PC-9 (cell line): ENCODE measurements at regions of chr11 and their contacts with region 1.

Region 1: DNA sequence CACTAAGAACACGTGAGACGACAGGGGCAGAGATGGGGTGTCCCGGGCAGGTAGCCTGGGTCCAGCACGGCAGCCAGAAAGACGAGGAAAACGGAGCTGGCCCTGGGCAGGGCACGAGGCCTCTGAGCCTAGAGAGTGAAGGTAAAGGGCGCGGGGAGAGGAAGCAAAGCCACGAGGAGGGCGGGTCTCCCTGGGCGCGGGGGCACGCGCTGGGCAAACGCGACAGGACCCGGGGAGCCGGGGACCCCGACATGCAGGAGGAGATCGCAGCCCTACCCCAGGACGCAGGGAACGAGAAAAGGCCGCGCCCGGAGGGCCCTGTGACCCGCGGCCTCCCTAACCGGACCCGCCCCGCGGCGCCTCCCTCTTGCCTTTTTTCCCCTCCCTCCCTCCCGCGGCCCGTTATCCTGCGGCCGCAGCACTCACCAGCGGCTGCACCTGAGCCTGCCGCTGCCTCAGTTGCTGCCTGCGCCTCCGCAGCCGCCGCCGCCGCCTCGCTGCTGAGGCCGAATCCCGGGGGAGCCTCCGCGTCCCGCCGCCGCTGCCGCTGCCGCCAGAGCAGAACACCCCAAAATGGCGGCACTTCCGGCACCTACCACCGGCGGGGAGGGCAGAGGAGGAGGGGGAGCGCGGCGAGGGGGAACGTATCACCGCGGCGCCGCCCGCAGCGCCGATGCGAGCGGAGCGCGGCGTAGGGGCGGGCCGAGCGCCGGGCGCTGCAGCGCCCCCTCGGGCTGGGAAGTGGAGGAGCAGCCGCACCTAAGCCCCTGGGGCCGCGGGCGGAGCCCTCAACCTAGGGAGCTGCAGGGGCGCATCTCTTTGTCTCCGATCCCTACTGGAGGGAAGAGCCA is at the start of gene CELF1:
- DNase-seq: peak; percentile 77 to 96
- H3K4me3 ChIP-seq: peak within 1 kb of the TSS; percentile 80
- H3K27ac ChIP-seq: peak within 1 kb of the TSS; percentile 87
- H3K4me1 ChIP-seq: peaks cover 24% of the 10 kb centered on the region
- H3K27me3 ChIP-seq: no peaks in the 10 kb centered on the region
- CTCF ChIP-seq: peak; percentile 85
- total RNA-seq, gene CELF1: 115 and 165 TPM in 2 replicates

Region 2: GRCh38 chr11:47186076-47186936 is 366.5 kb before region 1 on chr11 and contains the start of gene PACSIN3:
- CTCF ChIA-PET with region 1: interaction called, 11 read pairs
- POLR2A ChIA-PET with region 1: no interaction called
- intact Hi-C with region 1: no loop called
- DNase-seq: peak in 1 of 2 experiments; percentile 64
- H3K4me3 ChIP-seq: peak within 1 kb of the TSS; percentile 77
- H3K27ac ChIP-seq: peak within 1 kb of the TSS; percentile 84
- H3K4me1 ChIP-seq: peaks cover 56% of the 10 kb centered on the region
- H3K27me3 ChIP-seq: no peaks in the 10 kb centered on the region
- CTCF ChIP-seq: no peak
- total RNA-seq, gene PACSIN3: 113 and 114 TPM in 2 replicates

Region 3: GRCh38 chr11:47403571-47403970 is 149.2 kb before region 1 on chr11:
- CTCF ChIA-PET with region 1: no interaction called
- POLR2A ChIA-PET with region 1: no interaction called
- intact Hi-C with region 1: no loop called
- DNase-seq: peak in 1 of 2 experiments; percentile 24
- H3K4me3 ChIP-seq: no peak overlapping the region
- H3K27ac ChIP-seq: no peak overlapping the region
- H3K4me1 ChIP-seq: peaks cover 11% of the 10 kb centered on the region
- H3K27me3 ChIP-seq: no peaks in the 10 kb centered on the region
- CTCF ChIP-seq: no peak

Region 4: GRCh38 chr11:47466701-47467250 is 86.0 kb before region 1 on chr11:
- CTCF ChIA-PET with region 1: interaction called, 3 read pairs
- POLR2A ChIA-PET with region 1: no interaction called
- intact Hi-C with region 1: loop called (anchors 5 kb)
- DNase-seq: peak; percentile 67 to 75
- H3K4me3 ChIP-seq: no peak overlapping the region
- H3K27ac ChIP-seq: peak overlapping the region; percentile 5; the same call in 1 of the 2 replicates
- H3K4me1 ChIP-seq: peaks cover 22% of the 10 kb centered on the region
- H3K27me3 ChIP-seq: no peaks in the 10 kb centered on the region
- CTCF ChIP-seq: no peak

Region 5: DNA sequence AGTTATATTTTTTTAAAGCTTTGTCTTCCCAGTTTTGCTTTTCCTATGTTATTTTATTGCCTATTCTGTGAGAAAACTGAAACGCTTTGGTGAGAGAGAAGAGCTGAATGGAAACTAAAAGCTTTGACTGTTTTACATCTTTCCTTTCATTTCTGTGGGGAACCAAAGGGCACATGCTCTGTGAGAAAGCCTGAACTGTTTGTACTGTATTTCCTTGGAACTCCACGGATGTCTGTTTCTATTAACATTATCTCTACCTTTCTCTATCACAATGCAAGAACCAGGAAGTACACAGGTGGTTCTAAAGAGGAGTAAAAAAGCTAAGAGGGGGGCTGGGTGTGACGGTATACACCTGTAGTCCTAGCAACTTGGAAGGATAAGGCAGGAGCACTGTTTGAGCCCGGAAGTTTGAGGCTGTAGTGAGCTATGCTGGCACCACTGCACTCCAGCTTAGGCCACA is 43.7 kb before region 1 on chr11:
- CTCF ChIA-PET with region 1: interaction called, 6 read pairs
- POLR2A ChIA-PET with region 1: no interaction called
- intact Hi-C with region 1: loop called (anchors 1 kb)
- DNase-seq: peak in 1 of 2 experiments; percentile 68
- H3K4me3 ChIP-seq: no peak overlapping the region
- H3K27ac ChIP-seq: peak overlapping the region; percentile 80
- H3K4me1 ChIP-seq: peaks cover 49% of the 10 kb centered on the region
- H3K27me3 ChIP-seq: no peaks in the 10 kb centered on the region
- CTCF ChIP-seq: no peak

Region 6: GRCh38 chr11:47628026-47628425 is 75.2 kb after region 1 on chr11:
- CTCF ChIA-PET with region 1: no interaction called
- POLR2A ChIA-PET with region 1: no interaction called
- intact Hi-C with region 1: no loop called
- DNase-seq: no peak
- H3K4me3 ChIP-seq: no peak overlapping the region
- H3K27ac ChIP-seq: no peak overlapping the region
- H3K4me1 ChIP-seq: no peaks in the 10 kb centered on the region
- H3K27me3 ChIP-seq: no peaks in the 10 kb centered on the region
- CTCF ChIP-seq: no peak